ENCODE measurements at regions of chr7 and their contacts with region 1.

Region 1: DNA sequence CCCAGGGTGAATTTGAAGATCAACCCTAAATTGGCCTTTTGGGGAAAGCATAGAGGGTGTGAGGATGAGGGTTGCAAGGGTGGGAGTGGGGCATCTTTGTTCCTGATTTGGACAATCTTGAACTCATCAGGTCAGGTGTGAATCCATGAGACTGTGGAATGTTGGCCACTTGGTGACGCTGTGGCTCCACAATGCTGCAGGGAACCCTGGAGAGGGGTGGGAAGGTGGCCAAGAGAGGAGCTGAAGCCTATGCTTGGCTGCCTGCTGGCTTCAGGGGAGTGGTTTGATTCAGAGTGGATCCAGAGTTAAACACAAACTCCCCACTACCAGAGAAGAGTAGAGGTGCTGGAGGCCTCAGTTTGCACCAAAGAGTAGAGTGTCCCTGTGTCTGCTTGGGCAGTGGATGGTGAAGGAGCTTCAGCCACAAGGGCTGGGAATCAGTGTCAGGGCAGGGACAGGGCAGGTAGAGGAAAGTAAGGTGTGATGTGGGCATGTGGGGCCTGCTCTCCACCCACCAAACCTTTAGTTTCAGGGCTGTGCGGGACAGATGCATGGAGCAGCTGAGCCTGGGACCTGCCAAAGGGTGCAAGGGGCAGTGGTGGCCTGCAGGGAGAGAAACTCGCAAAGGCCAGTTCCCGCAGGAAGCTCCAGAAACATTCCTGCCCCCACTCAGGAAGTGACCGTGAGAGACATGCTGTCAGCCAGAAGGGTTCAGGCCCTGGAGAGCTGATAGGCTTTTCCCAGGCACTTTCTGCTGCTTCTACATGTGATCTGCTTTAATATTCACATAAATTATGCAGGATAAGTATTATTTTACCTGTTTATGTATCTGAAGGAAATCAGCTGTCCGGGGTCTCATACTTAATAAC is 81.0 kb upstream of the PRSS58 start:
- H3K4me3 ChIP-seq: no peak overlapping the region
- H3K27ac ChIP-seq: no peak overlapping the region
- H3K4me1 ChIP-seq: no peaks in the 10 kb centered on the region
- CTCF ChIP-seq: peak; percentile 79

Region 2: DNA sequence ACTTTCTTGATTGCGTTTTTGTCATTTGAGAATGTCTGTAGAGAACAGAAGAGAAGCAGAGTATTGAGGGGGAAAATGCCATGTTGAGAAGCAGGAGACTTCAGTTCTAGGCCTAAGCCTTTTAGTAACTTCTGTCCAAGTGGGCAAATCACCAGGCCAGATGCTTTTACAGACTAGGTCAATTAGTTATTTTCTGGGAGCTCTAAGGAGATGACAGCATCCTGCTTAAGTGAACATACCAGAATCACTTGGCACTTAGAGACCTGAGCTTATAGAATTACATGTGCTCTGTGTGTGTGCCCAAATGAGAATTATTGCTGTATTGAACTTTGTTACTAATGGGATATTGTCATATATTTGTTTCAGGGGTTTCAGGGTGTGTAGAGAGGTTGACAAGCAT is 763.7 kb before region 1 on chr7:
- CTCF ChIA-PET with region 1: no interaction called
- POLR2A ChIA-PET with region 1: no interaction called
- H3K4me3 ChIP-seq: no peak overlapping the region
- H3K27ac ChIP-seq: no peak overlapping the region
- H3K4me1 ChIP-seq: no peaks in the 10 kb centered on the region
- CTCF ChIP-seq: no peak

Region 3: GRCh38 chr7:142263598-142264380 is 75.1 kb before region 1 on chr7:
- CTCF ChIA-PET with region 1: no interaction called
- POLR2A ChIA-PET with region 1: no interaction called
- H3K4me3 ChIP-seq: no peak overlapping the region
- H3K27ac ChIP-seq: no peak overlapping the region
- H3K4me1 ChIP-seq: no peaks in the 10 kb centered on the region
- CTCF ChIP-seq: no peak

Region 4: DNA sequence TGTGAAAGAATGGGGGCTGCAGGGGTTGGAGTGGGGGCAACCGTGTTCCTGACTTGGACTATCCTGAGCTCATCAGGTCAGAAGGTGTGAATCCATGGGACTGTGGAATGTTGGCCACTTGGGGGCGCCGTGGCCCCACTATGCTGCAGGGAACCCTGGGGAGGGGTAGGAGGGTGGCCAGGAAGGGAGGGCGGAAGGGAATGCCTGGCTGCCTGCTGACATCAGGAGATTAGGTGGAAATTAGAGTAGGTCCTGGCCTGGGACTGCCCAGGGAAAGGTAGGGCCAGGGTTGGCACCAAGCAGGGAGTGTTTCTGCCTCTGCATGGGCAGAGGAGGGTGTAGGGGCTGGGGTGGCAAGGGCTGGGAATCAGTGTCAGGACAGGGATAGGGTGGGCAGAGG is 15.2 kb before region 1 on chr7:
- CTCF ChIA-PET with region 1: interaction called, 24 read pairs
- POLR2A ChIA-PET with region 1: no interaction called
- H3K4me3 ChIP-seq: no peak overlapping the region
- H3K27ac ChIP-seq: no peak overlapping the region
- H3K4me1 ChIP-seq: no peaks in the 10 kb centered on the region
- CTCF ChIP-seq: peak; percentile 64; the same call in 1 of the 2 replicates

Region 5: DNA sequence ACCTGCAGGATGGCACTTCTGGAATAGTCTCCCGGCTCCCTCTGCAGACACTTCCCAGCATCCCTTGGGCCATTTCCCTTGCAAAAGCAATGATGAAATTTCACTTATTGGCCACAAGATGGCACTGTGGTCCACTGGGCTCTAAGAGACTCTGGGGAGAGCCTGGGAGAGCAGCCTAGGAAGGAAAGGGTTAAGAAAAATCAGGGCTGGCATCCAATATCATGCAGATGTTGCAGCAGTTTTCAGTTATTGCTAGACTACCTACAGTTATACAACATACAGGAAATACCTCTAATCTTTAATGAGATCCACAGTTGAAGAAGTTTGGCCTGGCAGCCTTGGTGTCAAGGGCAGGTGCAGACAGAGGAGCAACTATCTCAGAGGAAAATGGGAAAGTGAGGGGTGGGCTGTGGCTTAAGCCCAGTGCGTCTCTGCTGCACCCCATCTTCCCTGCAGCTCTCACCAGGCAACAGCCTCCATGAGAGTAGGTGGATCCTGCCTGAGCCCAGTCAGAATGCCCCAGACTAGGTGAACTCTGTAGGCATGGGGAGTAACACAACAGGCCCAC is 19.2 kb after region 1 on chr7:
- CTCF ChIA-PET with region 1: interaction called, 25 read pairs
- POLR2A ChIA-PET with region 1: no interaction called
- H3K4me3 ChIP-seq: no peak overlapping the region
- H3K27ac ChIP-seq: no peak overlapping the region
- H3K4me1 ChIP-seq: no peaks in the 10 kb centered on the region
- CTCF ChIP-seq: 0 out of 2 replicates have a peak, but pooled peaks have one; percentile 30

Region 6: DNA sequence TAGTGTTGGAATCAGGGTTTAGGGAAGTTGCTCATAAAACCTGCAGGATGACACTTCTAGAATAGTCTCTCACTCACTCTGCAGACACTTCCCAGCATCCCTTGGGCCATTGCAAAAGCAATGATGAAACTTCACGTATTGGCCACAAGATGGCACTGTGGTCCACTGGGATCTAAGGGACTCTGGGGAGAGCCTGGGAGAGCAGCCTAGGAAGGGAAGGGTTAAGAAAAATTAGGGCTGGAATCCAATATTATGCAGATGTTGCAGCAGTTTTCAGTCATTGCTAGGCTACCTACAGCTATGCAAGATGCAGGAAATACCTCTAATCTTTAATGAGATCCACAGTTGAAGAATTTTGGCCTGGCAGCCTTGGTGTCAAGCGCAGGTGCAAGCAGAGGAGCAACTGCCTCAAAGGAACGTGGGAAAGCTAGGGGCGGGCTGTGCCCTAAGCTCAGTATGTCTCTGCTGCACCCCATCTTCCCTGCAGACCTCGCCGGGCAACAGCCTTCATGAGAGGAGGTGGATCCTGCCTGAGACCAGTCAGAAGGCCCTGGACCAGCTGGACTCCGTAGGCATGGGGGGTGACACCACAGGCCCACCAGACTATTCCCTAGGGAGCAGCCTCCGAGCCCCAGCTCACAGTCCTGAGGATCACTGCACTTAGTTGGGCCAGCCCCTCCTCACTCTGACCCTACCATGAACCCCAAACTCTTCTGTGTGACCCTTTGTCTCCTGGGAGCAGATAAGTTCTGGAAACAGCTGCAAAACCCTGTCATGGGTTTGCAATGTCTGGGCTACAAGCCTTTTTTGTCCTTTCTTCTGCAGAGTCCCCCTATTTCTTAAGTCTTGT is 46.8 kb after region 1 on chr7:
- CTCF ChIA-PET with region 1: interaction called, 15 read pairs
- POLR2A ChIA-PET with region 1: no interaction called
- H3K4me3 ChIP-seq: no peak overlapping the region
- H3K27ac ChIP-seq: no peak overlapping the region
- H3K4me1 ChIP-seq: no peaks in the 10 kb centered on the region
- CTCF ChIP-seq: peak; percentile 48

Region 7: DNA sequence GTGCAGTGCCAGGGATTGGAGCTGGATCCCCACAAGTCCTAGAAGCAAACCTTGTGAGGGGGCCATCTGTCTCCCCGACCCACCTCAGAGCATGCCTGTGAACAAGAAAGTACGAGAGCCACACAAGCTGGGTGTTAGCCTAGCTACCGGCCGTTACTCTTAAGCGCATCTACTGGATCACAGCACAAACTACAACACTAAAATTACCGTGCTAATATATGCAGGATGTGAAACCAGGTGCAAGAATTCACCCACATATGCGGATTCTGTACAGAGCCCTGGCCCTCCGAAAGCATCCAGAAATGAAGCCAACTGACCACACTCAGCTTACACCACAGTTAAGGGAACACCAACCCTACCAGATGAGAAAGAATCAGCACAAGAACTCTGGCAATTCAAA is 394.4 kb after region 1 on chr7:
- CTCF ChIA-PET with region 1: no interaction called
- POLR2A ChIA-PET with region 1: no interaction called
- H3K4me3 ChIP-seq: no peak overlapping the region
- H3K27ac ChIP-seq: no peak overlapping the region
- H3K4me1 ChIP-seq: no peaks in the 10 kb centered on the region
- CTCF ChIP-seq: no peak

Measured in HEK293 (cell line).